Mammary epithelial cell (primary cell): ENCODE measurements at regions of chr9 and their contacts with region 1.

Region 1: DNA sequence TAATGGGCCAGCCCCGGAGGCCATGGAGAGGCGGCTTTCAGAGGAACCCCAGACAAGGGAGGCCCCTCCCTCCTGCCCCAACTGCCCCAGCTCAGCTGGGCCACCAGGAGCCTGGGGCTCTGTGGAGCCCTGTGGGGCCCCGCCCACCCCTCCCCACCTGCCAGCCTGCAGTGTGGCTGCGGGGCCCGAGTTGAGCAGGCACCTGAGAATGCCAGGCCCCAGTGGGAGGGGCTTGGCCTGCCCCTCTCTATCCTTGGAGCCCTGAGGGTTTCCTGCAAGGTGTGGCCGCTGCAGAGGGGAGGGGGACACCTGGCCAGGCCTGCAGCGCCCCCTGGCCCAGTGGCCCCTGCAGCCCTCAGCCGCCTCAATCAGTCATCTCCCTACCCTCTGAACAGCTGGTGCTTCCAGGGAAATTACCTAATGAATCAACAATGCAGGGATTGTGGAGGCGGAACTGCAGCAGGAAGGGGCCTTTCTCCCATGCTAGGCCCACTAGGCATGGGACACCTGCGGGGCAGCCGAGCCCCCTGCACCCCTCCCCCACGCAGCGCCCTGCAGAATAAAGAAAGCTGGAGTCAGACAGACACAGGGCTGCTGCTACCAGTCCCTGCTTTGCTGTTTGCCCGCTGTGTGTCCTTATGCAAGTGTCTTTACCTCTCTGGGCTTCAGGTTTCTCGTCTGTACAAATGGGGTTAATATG is 47.9 kb downstream of the LMX1B start:
- DNase-seq: peak; percentile 87
- H3K4me3 ChIP-seq: no peak overlapping the region
- H3K27ac ChIP-seq: peak overlapping the region; percentile 5
- H3K4me1 ChIP-seq: peaks cover 45% of the 10 kb centered on the region
- H3K27me3 ChIP-seq: no peaks in the 10 kb centered on the region
- CTCF ChIP-seq: peak; percentile 6 to 47

Region 2: DNA sequence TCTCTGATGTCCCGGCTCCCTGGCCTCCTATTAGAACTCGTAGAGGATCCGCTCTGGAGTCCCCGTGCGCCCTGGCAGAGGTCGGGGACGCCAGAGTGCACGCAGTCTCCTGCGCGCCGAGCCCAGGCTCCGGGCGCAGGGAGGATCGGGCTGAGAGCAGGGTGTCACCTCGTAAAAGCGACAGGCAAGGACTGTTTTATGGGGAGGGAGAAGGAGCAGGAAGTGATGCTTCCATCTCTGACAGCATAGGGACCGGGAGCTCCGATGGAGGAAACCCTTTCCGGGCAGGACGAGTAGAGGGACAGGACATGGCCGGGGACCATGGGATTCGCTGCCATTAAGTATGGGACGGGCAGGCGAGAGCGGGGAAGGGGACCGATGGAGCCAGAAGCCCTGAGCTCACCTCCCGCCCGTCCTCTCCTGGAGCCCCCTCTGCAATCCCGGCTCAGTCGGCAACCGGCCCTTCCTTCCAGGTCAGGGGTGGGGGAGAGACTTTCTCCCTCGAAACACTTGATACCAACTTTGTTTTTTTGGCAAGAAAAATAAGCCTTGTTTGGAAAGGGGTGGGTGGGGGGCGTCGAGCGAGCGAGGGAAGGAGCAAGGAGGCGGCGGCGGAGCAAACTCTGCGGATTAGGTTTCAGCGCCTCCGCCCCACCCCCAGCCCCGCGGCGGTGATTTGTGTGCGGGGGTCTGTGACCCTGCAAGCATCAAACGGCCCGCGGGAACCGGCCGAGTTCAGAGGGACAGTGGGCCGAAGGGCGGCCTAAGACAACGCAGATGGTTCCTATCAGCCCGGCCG is 35.3 kb before region 1 on chr9:
- CTCF ChIA-PET with region 1: no interaction called
- dilution Hi-C with region 1: loop called (anchors 5 kb)
- in situ Hi-C with region 1: no loop called
- intact Hi-C with region 1: no loop called
- DNase-seq: no peak
- H3K4me3 ChIP-seq: peak overlapping the region; percentile 37 to 40 (median 40)
- H3K27ac ChIP-seq: no peak overlapping the region
- H3K4me1 ChIP-seq: peaks cover 56% of the 10 kb centered on the region
- H3K27me3 ChIP-seq: no peaks in the 10 kb centered on the region
- CTCF ChIP-seq: no peak

Region 3: GRCh38 chr9:126696381-126697145 is 34.9 kb after region 1 on chr9:
- CTCF ChIA-PET with region 1: no interaction called
- dilution Hi-C with region 1: loop called (anchors 5 kb)
- in situ Hi-C with region 1: no loop called
- intact Hi-C with region 1: no loop called
- DNase-seq: no peak
- H3K4me3 ChIP-seq: no peak overlapping the region
- H3K27ac ChIP-seq: no peak overlapping the region
- H3K4me1 ChIP-seq: peaks cover 12% of the 10 kb centered on the region
- H3K27me3 ChIP-seq: no peaks in the 10 kb centered on the region
- CTCF ChIP-seq: no peak